HepG2 (cell line): ENCODE measurements at regions of chr6 and their contacts with region 1.

Region 1: DNA sequence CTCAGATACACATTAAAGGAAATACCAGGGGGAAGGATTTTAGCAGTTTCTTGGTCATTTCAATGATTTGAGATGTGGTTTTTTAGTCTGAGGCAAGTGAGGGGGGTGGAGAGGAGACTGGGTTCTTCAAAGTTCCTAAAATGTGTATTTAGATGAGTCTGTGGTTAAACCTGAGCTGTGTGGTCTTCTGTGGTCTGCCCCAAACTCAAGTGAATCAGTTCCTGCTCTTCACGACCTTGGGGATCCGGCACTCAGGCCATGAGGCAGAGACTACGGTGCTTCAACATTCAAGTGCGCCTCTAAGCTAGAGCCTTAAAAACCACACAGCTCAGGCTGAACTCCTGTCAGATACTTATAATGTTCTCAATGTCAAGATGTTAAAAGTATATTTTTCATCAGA is 406.7 kb downstream of the LMBRD1 start:
- DNase-seq: no peak
- ATAC-seq: no peak
- H3K4me3 ChIP-seq: no peak overlapping the region
- H3K27ac ChIP-seq: no peak overlapping the region
- H3K4me1 ChIP-seq: no peaks in the 10 kb centered on the region
- H3K27me3 ChIP-seq: no peaks in the 10 kb centered on the region
- CTCF ChIP-seq: no peak
- EP300 ChIP-seq: no peak
- POLR2A ChIP-seq: no peak
- RAD21 ChIP-seq: no peak

Region 2: DNA sequence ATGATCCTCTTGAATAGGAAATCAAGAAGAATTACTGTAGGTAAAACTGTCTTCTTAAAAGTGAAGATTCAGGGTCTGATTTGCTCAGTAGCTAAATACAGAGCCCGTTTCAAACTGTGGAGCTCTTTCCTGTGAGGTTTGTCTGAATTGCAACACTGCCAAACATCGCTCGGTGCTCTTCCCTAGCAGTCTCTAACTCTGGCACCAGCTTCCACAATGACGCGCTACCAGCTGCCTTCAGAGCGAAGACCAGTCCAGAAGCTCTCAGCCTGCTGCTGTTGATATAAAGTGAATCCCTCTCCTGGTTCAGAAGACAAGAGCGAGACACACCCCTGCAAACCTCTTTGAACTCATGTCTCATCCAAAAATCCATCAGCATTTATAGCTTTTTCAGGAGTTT is 40.4 kb before region 1 on chr6:
- CTCF ChIA-PET with region 1: no interaction called
- POLR2A ChIA-PET with region 1: no interaction called
- in situ Hi-C with region 1: no loop called
- intact Hi-C with region 1: loop called (anchors 1 kb)
- DNase-seq: no peak
- ATAC-seq: no peak
- H3K4me3 ChIP-seq: no peak overlapping the region
- H3K27ac ChIP-seq: no peak overlapping the region
- H3K4me1 ChIP-seq: no peaks in the 10 kb centered on the region
- H3K27me3 ChIP-seq: no peaks in the 10 kb centered on the region
- CTCF ChIP-seq: no peak
- EP300 ChIP-seq: no peak
- POLR2A ChIP-seq: no peak
- RAD21 ChIP-seq: no peak

Region 3: GRCh38 chr6:69370763-69371162 is 19.4 kb before region 1 on chr6:
- CTCF ChIA-PET with region 1: no interaction called
- POLR2A ChIA-PET with region 1: no interaction called
- in situ Hi-C with region 1: no loop called
- intact Hi-C with region 1: no loop called
- DNase-seq: no peak
- ATAC-seq: no peak
- H3K4me3 ChIP-seq: no peak overlapping the region
- H3K27ac ChIP-seq: no peak overlapping the region
- H3K4me1 ChIP-seq: no peaks in the 10 kb centered on the region
- H3K27me3 ChIP-seq: no peaks in the 10 kb centered on the region; a peak in 1 of 5 replicates
- CTCF ChIP-seq: no peak
- EP300 ChIP-seq: no peak
- POLR2A ChIP-seq: no peak
- RAD21 ChIP-seq: no peak

Region 4: GRCh38 chr6:69456086-69456485 is 66.0 kb after region 1 on chr6:
- CTCF ChIA-PET with region 1: no interaction called
- POLR2A ChIA-PET with region 1: no interaction called
- in situ Hi-C with region 1: no loop called
- intact Hi-C with region 1: no loop called
- DNase-seq: no peak
- ATAC-seq: no peak
- H3K4me3 ChIP-seq: no peak overlapping the region
- H3K27ac ChIP-seq: no peak overlapping the region
- H3K4me1 ChIP-seq: no peaks in the 10 kb centered on the region
- H3K27me3 ChIP-seq: no peaks in the 10 kb centered on the region
- CTCF ChIP-seq: no peak
- EP300 ChIP-seq: no peak
- POLR2A ChIP-seq: no peak
- RAD21 ChIP-seq: no peak

Region 5: DNA sequence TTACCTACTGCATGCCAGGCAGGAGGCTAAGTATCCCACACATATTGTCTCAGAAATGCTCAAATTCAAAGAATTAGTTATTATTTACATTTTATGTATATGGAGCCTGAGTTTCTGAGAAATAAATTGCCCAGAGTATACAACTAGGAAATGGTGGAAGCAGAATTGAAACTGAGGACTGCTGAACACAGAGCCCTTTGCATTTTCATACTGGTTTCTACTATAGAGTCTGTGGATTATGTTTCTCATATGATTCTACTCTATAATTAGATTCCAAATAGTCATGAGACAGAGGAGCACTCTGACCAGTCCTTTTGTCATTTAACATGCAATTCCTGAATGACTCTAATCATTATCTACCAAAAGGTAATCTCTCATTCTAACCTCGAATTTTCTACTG is 152.4 kb after region 1 on chr6:
- CTCF ChIA-PET with region 1: no interaction called
- POLR2A ChIA-PET with region 1: no interaction called
- in situ Hi-C with region 1: no loop called
- intact Hi-C with region 1: no loop called
- DNase-seq: no peak
- ATAC-seq: no peak
- H3K4me3 ChIP-seq: no peak overlapping the region
- H3K27ac ChIP-seq: no peak overlapping the region
- H3K4me1 ChIP-seq: no peaks in the 10 kb centered on the region
- H3K27me3 ChIP-seq: no peaks in the 10 kb centered on the region
- CTCF ChIP-seq: no peak
- EP300 ChIP-seq: no peak
- POLR2A ChIP-seq: no peak
- RAD21 ChIP-seq: no peak